CD4-positive, alpha-beta T cell (primary cell): ENCODE measurements at regions of chr10 and their contacts with region 1.

Region 1: GRCh38 chr10:85548034-85548433 is 818.6 kb downstream of the GRID1 start:
- DNase-seq: peak in 10 of 14 experiments; percentile 3 to 60 (median 17)
- ATAC-seq: peak; percentile 51
- H3K4me3 ChIP-seq: no peak overlapping the region
- H3K4me3 Mint-ChIP-seq: no peak overlapping the region
- H3K27ac ChIP-seq: no peak overlapping the region
- H3K27ac Mint-ChIP-seq: no peak overlapping the region
- H3K4me1 ChIP-seq: no peaks in the 10 kb centered on the region
- H3K4me1 Mint-ChIP-seq: no peaks in the 10 kb centered on the region
- H3K27me3 ChIP-seq: peaks cover 0 to 5% of the 10 kb centered on the region in 2 experiments
- H3K27me3 Mint-ChIP-seq: peaks cover 34% of the 10 kb centered on the region
- CTCF ChIP-seq: peak; percentile 64

Region 2: DNA sequence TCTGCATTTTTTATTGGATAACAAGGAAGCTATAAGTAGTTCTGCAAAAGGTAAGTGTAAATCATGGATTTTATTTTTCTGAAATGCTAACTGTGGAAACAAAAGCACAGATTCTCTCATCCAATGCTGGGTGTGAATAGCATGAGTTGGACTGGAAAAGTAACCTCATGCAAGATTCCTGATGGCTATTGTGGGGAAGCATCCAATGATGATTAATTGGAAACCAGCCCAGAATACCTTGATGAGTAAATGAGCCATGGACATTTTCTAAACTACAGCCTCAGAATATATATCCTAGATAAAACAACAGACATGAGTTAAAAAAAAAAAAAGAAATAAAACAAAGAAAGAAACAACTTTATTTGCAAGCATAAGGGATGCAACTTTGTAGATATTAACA is 285.0 kb before region 1 on chr10:
- CTCF ChIA-PET with region 1: no interaction called
- POLR2A ChIA-PET with region 1: no interaction called
- intact Hi-C with region 1: no loop called
- DNase-seq: no peak
- ATAC-seq: no peak
- H3K4me3 ChIP-seq: no peak overlapping the region
- H3K4me3 Mint-ChIP-seq: no peak overlapping the region
- H3K27ac ChIP-seq: no peak overlapping the region
- H3K27ac Mint-ChIP-seq: no peak overlapping the region
- H3K4me1 ChIP-seq: no peaks in the 10 kb centered on the region
- H3K4me1 Mint-ChIP-seq: no peaks in the 10 kb centered on the region
- H3K27me3 ChIP-seq: no peaks in the 10 kb centered on the region
- H3K27me3 Mint-ChIP-seq: no peaks in the 10 kb centered on the region
- CTCF ChIP-seq: no peak

Region 3: DNA sequence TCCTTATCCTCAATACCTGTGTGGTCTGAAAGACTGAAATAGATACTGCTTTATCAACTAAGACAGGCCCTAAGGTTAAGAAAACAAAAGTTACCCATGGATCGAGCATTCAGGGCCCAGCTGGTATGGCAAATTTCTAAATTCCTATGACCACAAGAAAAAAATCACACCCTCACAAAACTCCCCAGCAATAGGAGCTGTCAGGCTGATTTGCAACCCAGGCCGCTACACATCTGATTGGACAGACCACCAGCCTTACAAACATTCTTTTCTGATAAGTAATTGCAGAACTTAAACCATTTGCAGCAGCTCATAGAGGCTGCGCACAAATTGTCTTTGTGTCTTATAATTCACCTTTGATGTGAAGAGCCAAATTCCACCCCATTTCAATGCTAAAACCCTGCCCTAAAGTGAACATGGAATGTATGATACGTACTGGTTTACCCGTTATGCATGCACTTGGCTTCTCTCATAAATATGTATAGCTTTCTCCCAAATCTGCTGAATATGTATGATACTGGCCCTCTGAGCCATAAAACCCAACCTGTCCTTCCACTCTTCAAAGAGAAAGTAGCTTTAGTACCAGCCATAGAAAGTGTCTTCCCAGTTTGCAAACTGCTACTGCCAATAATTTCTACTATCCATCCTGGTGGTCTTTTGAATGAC is 23.9 kb before region 1 on chr10:
- CTCF ChIA-PET with region 1: no interaction called
- POLR2A ChIA-PET with region 1: no interaction called
- intact Hi-C with region 1: no loop called
- DNase-seq: no peak
- ATAC-seq: no peak
- H3K4me3 ChIP-seq: no peak overlapping the region
- H3K4me3 Mint-ChIP-seq: no peak overlapping the region
- H3K27ac ChIP-seq: no peak overlapping the region
- H3K27ac Mint-ChIP-seq: no peak overlapping the region
- H3K4me1 ChIP-seq: no peaks in the 10 kb centered on the region
- H3K4me1 Mint-ChIP-seq: no peaks in the 10 kb centered on the region
- H3K27me3 ChIP-seq: peaks cover 0 to 3% of the 10 kb centered on the region in 2 experiments
- H3K27me3 Mint-ChIP-seq: peaks cover 30% of the 10 kb centered on the region
- CTCF ChIP-seq: no peak

Region 4: DNA sequence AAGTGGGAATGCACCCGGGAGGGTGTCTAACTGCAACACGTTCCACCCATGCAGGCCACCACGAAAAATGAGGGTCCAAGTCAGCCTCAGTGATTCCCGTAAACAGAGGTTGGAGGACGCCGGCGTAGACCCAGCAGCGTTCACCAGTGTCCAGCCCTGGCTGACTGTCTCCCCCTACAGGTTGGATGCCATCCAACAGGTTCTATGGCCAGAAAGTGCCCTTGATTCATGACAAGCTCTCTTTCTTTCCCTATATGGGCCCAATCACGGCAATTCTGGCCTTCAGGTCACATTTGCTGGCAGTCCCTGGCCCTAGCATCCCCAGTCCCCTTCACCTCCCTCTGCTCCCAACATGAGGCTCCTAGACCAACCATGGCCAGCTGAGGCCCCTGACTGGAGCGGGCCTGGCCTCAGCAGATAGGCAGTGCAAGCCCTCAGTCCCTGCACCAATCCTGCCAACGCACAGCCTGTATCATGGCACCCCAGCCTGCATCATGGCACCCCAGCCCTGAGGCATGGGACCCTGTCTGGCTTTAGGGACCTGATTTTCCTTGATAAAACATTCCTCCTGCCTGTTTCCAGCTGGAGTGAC is 591.1 kb after region 1 on chr10:
- CTCF ChIA-PET with region 1: no interaction called
- POLR2A ChIA-PET with region 1: no interaction called
- intact Hi-C with region 1: loop called in 1 of 2 experiments (anchors 10 kb)
- DNase-seq: peak in 3 of 14 experiments; percentile 10 to 35 (median 23)
- ATAC-seq: no peak
- H3K4me3 ChIP-seq: no peak overlapping the region
- H3K4me3 Mint-ChIP-seq: no peak overlapping the region
- H3K27ac ChIP-seq: no peak overlapping the region
- H3K27ac Mint-ChIP-seq: no peak overlapping the region
- H3K4me1 ChIP-seq: no peaks in the 10 kb centered on the region
- H3K4me1 Mint-ChIP-seq: no peaks in the 10 kb centered on the region
- H3K27me3 ChIP-seq: no peaks in the 10 kb centered on the region
- H3K27me3 Mint-ChIP-seq: no peaks in the 10 kb centered on the region
- CTCF ChIP-seq: no peak